Dorsolateral prefrontal cortex (tissue), 120 donors: ENCODE measurements at regions of chr12 and their contacts with region 1.

Region 1: GRCh38 chr12:55926738-55927587 is 731 bp downstream of the PYM1 start:
- DNase-seq: peak; percentile 78 to 91 (median 85)
- H3K4me3 ChIP-seq: peak overlapping the region; percentile 62 to 100 (median 95)
- H3K27ac ChIP-seq: peak overlapping the region; percentile 89 to 99 (median 97)
- H3K27me3 ChIP-seq: no peaks in the 10 kb centered on the region
- CTCF ChIP-seq: peak; percentile 68 to 97 (median 87)

Region 2: GRCh38 chr12:55829967-55830600 is 96.9 kb before region 1 on chr12:
- intact Hi-C with region 1: loop called (anchors 1 kb)
- DNase-seq: peak in 8 of 10 donors; percentile 48 to 72 (median 59)
- H3K4me3 ChIP-seq: peak overlapping the region; percentile 68 to 99 (median 93)
- H3K27ac ChIP-seq: peak overlapping the region; percentile 82 to 100 (median 98)
- H3K27me3 ChIP-seq: no peaks in the 10 kb centered on the region
- CTCF ChIP-seq: peak in 2 of 56 donors; percentile 6 to 23

Region 3: DNA sequence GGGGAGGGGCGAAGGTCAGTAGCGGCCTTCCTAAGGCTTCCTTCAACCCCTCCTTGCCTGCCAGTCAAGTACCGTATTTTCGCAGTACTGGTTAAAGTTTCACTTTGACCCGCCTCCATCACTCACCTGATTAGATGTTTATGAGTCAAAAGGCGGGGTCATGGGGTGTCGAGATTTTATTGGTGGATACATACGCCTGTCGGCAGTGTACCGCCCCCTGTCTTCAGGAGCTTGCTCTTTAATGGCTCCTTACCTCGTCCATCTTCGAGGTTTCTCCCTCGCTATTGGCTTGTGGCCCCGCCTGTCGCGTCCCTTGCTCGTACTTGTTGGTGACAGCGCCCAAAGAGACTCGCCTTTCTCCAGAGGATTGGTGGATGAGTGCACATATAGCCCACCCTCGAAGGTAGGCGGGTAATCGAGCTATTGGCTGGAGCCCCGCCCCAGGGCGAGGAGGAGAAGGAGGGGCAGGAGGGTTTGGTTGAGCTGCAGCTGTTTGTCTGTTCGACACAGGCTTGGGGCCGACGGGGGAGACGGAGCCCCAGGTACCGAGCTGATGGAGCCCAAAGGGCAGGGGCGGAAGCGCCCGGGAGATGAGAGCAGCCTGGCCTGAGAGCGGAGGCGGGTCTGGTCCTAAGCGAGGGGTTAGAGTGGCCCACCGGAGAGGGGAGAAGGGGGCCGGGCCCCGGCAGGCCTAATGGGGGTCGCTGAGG is 46.8 kb after region 1 on chr12 and contains the start of gene RAB5B:
- intact Hi-C with region 1: loop called (anchors 5 kb)
- DNase-seq: peak; percentile 97 to 100 (median 100)
- H3K4me3 ChIP-seq: peak within 1 kb of the TSS; percentile 70 to 100 (median 98)
- H3K27ac ChIP-seq: peak within 1 kb of the TSS; percentile 60 to 98 (median 93)
- H3K27me3 ChIP-seq: no peaks in the 10 kb centered on the region
- CTCF ChIP-seq: peak in 45 of 56 donors; percentile 15 to 77 (median 40)
- total RNA-seq, gene RAB5B: 148 to 223 (median 185) TPM